MCF 10A (cell line): ENCODE measurements at regions of chr12 and their contacts with region 1.

Region 1: GRCh38 chr12:115303723-115304309 is 619.8 kb upstream of the TBX3 start:
- DNase-seq: no peak
- H3K4me3 Mint-ChIP-seq: no peak overlapping the region
- H3K27ac Mint-ChIP-seq: no peak overlapping the region
- H3K4me1 Mint-ChIP-seq: no peaks in the 10 kb centered on the region
- H3K27me3 Mint-ChIP-seq: no peaks in the 10 kb centered on the region
- CTCF ChIP-seq: no peak

Region 2: GRCh38 chr12:115257791-115258190 is 46.0 kb before region 1 on chr12:
- CTCF ChIA-PET with region 1: no interaction called
- POLR2A ChIA-PET with region 1: no interaction called
- intact Hi-C with region 1: loop called (anchors 10 kb)
- DNase-seq: peak; percentile 88
- H3K4me3 Mint-ChIP-seq: no peak overlapping the region
- H3K27ac Mint-ChIP-seq: peak overlapping the region; percentile 34
- H3K4me1 Mint-ChIP-seq: peaks cover 14% of the 10 kb centered on the region
- H3K27me3 Mint-ChIP-seq: no peaks in the 10 kb centered on the region
- CTCF ChIP-seq: no peak

Region 3: GRCh38 chr12:115323223-115323905 is 19.5 kb after region 1 on chr12:
- CTCF ChIA-PET with region 1: no interaction called
- POLR2A ChIA-PET with region 1: no interaction called
- intact Hi-C with region 1: no loop called
- DNase-seq: peak; percentile 61
- H3K4me3 Mint-ChIP-seq: no peak overlapping the region
- H3K27ac Mint-ChIP-seq: peak overlapping the region; percentile 46
- H3K4me1 Mint-ChIP-seq: peaks cover 24% of the 10 kb centered on the region
- H3K27me3 Mint-ChIP-seq: no peaks in the 10 kb centered on the region
- CTCF ChIP-seq: no peak